ENCODE measurements at regions of chr3 and their contacts with region 1.

Region 1: DNA sequence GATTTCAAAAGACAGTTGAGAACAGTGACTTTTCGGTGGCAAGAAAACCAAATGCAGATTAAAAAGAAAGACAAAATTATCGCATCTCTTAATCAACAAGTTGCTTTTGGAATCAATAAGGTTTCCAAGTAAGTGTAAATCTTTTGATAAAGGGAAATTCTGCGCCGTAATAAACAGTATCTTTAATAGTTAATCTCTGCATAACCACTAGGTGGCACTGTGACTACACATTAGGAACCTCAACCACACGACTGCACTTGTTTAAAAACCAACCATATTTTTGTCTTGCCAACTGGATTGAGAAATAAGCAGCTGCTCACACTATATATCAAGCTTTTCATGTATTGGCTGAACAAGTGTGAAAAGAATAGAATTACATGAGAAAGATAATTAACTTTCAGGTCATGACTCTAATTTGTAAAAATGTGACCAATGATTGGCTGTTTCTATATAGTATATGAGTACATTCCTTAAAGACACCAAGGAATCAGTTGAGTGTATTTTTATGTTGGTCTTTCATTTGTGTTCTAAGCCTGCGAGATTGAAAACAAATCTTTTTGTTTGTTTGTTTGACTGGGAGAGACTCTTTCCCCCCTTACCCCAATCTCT is 72.7 kb downstream of the DZIP3 start:
- DNase-seq: peak; percentile 76
- H3K4me3 Mint-ChIP-seq: no peak overlapping the region
- H3K27ac Mint-ChIP-seq: no peak overlapping the region
- H3K4me1 Mint-ChIP-seq: no peaks in the 10 kb centered on the region
- H3K27me3 Mint-ChIP-seq: no peaks in the 10 kb centered on the region
- CTCF ChIP-seq: peak; percentile 58

Region 2: DNA sequence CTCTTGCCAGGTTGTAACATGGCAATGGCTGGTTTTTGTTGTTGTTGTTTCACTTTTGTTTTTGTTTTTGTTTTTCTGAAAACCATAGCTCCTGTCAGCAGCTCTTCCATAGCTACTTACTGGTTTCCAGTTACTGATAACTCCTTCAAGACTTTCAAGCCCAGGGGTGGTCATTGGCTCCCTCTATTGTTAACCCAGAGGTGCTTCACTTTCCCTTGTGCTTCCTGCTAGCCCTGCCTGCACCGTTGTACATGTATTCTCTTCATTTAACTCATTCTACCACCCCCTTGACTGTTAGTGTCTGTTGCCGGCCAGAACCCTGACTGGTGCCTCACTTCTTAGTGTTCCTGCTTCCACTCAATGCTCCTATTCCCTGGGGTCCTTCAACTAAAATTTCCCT is 156.2 kb after region 1 on chr3:
- CTCF ChIA-PET with region 1: interaction called, 4 read pairs
- POLR2A ChIA-PET with region 1: no interaction called
- intact Hi-C with region 1: loop called (anchors 1 kb)
- DNase-seq: peak; percentile 59
- H3K4me3 Mint-ChIP-seq: no peak overlapping the region
- H3K27ac Mint-ChIP-seq: no peak overlapping the region
- H3K4me1 Mint-ChIP-seq: peaks cover 15% of the 10 kb centered on the region
- H3K27me3 Mint-ChIP-seq: no peaks in the 10 kb centered on the region
- CTCF ChIP-seq: no peak

Region 3: GRCh38 chr3:108936924-108937689 is 274.9 kb after region 1 on chr3:
- CTCF ChIA-PET with region 1: no interaction called
- POLR2A ChIA-PET with region 1: no interaction called
- intact Hi-C with region 1: no loop called
- DNase-seq: no peak
- H3K4me3 Mint-ChIP-seq: no peak overlapping the region
- H3K27ac Mint-ChIP-seq: no peak overlapping the region
- H3K4me1 Mint-ChIP-seq: peaks cover 5% of the 10 kb centered on the region
- H3K27me3 Mint-ChIP-seq: no peaks in the 10 kb centered on the region
- CTCF ChIP-seq: no peak

Region 4: DNA sequence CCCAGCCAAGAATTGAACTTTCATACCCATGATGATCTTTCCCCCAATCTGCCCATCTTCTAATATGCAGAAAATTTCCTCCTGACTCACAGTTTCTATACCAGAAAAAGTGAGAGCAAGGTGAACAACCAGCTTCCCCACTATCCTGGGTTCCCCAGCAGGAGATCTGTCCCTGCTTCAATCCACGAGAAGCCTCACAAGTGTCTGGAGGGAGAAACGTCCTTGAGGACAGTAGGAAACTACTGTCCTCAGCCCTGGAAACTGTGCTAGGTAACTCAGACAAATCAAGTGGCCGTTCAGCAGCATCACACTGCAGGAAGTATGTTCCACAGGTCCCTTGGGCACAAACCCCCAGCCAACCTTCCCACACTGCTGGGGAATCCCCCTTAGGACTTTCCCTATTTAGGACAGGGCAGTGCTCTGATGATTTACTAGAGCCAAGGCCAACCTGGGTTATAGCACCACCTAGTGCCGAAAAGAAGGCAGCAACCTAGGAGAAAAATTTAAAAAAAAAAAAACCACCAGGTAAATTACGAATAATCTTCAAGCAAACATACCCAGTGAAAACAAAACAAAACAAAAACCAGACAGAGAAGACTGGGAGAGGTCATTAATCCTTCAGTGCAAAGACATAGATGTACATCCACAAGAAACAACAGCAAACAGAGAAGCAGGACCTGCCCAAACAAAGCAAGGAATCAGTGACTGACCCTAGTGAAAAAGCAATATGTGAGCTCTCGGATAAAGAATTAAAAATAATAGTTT is 419.7 kb after region 1 on chr3:
- CTCF ChIA-PET with region 1: interaction called, 15 read pairs
- POLR2A ChIA-PET with region 1: no interaction called
- intact Hi-C with region 1: loop called (anchors 1 kb)
- DNase-seq: peak; percentile 71
- H3K4me3 Mint-ChIP-seq: no peak overlapping the region
- H3K27ac Mint-ChIP-seq: peak overlapping the region; percentile 55
- H3K4me1 Mint-ChIP-seq: peaks cover 6% of the 10 kb centered on the region
- H3K27me3 Mint-ChIP-seq: no peaks in the 10 kb centered on the region
- CTCF ChIP-seq: peak; percentile 75

Region 5: DNA sequence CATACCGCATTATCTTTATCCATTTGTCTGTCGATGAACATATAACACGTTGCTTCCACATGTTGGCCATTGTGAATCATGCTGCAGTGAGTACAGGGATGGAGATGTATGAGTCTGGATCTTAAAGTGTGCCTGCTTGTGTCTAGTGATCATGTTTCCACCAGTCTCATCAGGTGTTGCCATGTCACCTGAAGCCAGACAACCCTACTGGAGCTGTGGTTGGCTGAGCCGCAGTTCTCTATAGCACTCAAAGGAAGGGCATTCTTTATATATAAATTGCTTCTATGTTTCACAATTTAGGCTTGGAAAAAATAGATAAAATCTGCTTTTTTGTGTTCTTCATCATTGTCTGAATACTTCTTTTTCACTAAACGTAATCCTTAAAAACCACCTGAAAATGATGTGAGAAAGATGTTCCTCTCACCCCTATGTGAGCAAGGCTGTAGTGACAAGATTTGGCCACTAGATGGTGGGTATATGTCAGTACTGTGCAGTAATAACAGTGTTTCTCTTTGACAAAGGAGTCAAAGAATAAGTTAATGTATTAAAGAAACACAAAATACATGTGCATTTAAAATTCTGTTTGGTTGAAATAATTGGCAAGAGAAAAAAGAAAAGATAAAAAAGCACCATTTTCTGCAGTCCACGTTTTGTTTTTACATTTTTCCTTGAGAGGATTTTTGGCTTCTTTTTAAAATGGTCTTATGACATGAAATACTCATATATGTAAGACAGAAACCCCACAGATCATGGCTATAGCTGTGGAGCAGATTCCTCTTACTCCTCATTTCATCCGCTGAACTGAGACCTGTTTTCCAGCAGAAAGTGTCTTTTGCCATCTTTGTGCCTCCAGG is 1069.6 kb after region 1 on chr3:
- CTCF ChIA-PET with region 1: no interaction called
- POLR2A ChIA-PET with region 1: no interaction called
- intact Hi-C with region 1: loop called (anchors 5 kb)
- DNase-seq: peak; percentile 72
- H3K4me3 Mint-ChIP-seq: no peak overlapping the region
- H3K27ac Mint-ChIP-seq: no peak overlapping the region
- H3K4me1 Mint-ChIP-seq: peaks cover 7% of the 10 kb centered on the region
- H3K27me3 Mint-ChIP-seq: no peaks in the 10 kb centered on the region
- CTCF ChIP-seq: peak; percentile 85